Activated CD4-positive, alpha-beta T cell treated with anti-CD3 and anti-CD28 coated beads, Interleukin-2, amount 10 ng/mL, durations not matched to agents 7 days and 5 days (primary cell): ENCODE measurements at regions of chr14 and their contacts with region 1.

Region 1: DNA sequence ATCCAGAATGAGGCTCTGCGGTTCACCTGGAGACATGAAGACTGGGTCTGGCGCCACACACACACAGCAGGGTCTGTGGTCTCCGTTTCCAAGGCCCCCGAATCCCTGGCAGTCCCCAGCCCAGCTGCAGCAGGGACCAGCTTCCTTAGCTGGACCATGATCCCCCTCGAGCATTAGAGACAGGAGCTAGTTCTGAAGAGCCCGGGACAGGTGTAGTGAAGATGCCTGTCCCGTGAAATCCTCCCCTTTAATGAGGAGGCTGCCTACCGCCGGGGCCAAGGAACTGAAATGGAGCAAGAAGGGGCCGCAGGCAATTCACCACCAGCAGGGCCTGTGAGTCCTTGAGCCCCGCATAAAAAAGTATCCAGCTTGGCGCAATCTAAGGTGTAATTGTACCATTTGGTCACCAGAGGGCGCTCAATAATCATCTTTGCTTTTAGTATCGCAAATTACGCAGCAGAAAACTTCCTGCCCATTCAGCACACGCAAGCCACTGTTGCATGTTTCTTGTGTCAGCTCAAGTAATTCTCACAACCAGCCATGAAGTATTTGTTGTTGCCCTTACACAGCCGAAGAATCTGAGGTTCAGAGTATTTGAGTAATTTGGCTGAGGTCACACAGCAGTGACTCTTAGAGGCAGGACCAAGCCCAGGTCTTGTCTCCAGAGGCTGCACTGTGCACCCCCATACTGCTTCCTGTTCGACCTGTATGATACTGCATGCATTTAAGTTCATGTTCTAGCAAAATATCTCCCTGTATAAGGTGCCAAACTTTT is 54.3 kb upstream of the PPP2R5C start:
- DNase-seq: peak; percentile 83
- H3K4me3 Mint-ChIP-seq: no peak overlapping the region
- H3K27ac Mint-ChIP-seq: peak overlapping the region; percentile 86
- H3K4me1 Mint-ChIP-seq: peaks cover 32% of the 10 kb centered on the region
- H3K27me3 Mint-ChIP-seq: peaks cover 21% of the 10 kb centered on the region

Region 2: DNA sequence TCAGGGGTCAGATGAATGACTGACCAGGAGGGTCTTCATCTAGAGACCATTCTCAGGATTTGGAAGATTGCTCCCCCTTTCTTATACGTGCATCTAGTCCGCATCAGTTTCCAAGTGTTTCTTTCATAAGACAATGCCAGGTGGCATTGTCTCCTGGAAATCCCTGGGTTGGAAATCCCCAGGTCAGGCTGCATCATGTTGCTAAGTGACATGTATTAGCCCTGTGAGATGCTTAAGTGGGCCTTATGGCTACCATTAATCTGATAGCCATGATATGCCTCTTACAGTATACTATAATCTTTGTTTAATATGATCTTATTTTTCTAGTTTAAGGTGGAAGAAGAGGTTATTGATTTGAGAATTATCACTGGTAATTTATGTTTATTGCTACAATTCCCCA is 53.2 kb before region 1 on chr14:
- CTCF ChIA-PET with region 1: no interaction called
- POLR2A ChIA-PET with region 1: no interaction called
- DNase-seq: no peak
- H3K4me3 Mint-ChIP-seq: no peak overlapping the region
- H3K27ac Mint-ChIP-seq: no peak overlapping the region
- H3K4me1 Mint-ChIP-seq: peaks cover 6% of the 10 kb centered on the region
- H3K27me3 Mint-ChIP-seq: peaks cover 53% of the 10 kb centered on the region

Region 3: GRCh38 chr14:101726295-101726953 is 19.2 kb after region 1 on chr14:
- CTCF ChIA-PET with region 1: interaction called, 12 read pairs
- POLR2A ChIA-PET with region 1: interaction called, 4 read pairs
- DNase-seq: no peak
- H3K4me3 Mint-ChIP-seq: no peak overlapping the region
- H3K27ac Mint-ChIP-seq: peak overlapping the region; percentile 16
- H3K4me1 Mint-ChIP-seq: peaks cover 36% of the 10 kb centered on the region
- H3K27me3 Mint-ChIP-seq: no peaks in the 10 kb centered on the region

Region 4: DNA sequence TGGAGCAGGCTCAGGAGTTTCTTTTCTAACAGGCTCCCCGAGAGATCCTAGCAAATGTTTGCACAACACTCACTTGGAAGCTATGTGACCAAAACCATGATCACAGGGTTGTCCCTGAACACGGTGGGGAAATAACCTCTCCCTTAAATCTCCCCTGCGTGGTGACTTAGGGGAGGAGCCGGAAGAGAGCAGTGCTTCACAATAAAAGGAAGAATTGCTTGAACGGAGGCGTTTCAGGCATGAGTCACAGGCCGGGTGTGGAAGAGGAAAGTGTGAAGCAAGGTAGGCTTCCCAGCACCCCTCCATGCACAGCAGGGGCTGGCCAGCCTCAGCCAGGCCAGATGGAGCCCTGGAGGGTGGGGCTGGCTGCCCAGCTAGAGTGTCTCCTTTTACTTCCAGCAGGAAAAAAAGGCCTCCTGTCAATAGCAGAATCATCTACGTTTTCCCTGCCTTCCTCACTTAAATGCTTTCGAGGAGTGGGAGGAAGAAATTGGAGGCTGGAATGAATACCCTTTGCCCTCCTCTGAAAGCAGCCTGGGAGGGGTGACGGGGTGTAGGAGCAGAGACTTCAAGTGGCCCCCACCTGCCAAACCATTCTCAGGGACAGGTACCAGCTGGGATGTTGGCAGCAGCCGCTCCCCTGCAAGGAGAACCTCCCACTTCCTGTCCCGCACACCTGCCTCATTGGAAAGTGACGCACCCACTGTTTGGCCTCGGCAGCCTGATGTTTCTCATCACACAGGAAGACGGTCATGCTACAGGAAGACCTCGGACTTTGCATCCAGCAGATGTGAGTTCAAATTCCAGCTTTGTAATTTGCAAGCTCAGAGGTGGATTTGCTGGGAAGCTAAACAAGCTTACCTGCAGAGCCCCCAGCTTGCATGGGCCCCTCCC is 24.2 kb after region 1 on chr14:
- CTCF ChIA-PET with region 1: interaction called, 12 read pairs
- POLR2A ChIA-PET with region 1: no interaction called
- DNase-seq: peak; percentile 82
- H3K4me3 Mint-ChIP-seq: peak overlapping the region; percentile 31
- H3K27ac Mint-ChIP-seq: peak overlapping the region; percentile 88
- H3K4me1 Mint-ChIP-seq: peaks cover 39% of the 10 kb centered on the region
- H3K27me3 Mint-ChIP-seq: no peaks in the 10 kb centered on the region

Region 5: DNA sequence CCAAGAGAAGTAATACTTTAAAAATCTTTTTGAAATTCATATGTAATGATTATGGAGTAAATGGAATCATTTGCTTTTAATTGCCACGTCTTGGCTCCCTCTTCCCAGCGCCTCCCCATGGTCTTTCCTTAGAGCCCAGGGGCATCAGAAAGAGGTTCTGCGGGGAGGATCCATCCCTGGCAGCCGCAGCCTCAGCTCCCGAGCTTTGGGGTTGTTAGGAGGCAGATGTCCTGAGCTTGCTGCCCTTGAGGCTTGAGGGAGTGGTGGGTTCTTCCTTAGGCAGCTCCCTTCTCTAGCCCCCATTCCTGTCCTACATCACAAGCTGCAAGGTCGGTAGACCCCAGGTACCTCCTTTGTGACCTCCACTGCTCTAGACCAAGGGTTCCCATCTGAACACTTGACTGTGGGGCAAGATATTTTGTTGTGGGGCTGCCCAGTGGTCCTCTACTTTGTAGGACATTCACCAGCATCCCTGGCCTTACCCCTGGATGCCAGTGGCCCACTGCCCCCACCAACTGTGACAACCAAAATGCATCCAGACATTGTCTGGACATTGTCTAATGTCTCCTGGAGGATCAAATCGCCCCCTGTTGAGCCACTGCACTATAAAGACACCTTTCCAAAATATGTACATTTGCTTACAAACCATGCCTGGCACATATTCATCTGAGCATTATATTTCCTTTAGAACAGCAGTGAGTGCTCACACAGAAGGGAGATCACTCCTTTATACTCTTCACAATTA is 60.5 kb after region 1 on chr14:
- CTCF ChIA-PET with region 1: interaction called, 19 read pairs
- POLR2A ChIA-PET with region 1: no interaction called
- DNase-seq: no peak
- H3K4me3 Mint-ChIP-seq: no peak overlapping the region
- H3K27ac Mint-ChIP-seq: no peak overlapping the region
- H3K4me1 Mint-ChIP-seq: peaks cover 25% of the 10 kb centered on the region
- H3K27me3 Mint-ChIP-seq: no peaks in the 10 kb centered on the region

Region 6: DNA sequence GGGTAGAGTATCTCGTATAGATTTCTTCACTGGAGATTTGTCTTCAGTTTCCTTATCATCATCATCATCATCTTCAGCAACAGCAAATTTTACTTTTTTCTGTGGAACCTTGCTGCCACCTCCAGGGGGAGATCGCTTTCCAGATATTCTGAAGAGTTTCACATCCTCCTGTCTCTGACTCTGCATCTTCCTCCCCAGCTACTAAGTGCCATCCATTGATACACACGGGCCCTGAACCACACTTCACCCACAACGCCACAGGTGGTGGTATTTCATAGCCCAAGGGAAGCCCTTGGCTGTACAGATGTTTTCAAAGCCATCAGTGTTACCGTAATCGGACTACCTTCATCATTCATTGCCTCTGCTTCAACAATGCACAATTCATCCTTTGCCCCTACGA is 136.4 kb after region 1 on chr14:
- CTCF ChIA-PET with region 1: interaction called, 10 read pairs
- POLR2A ChIA-PET with region 1: interaction called, 4 read pairs
- DNase-seq: peak; percentile 68
- H3K4me3 Mint-ChIP-seq: no peak overlapping the region
- H3K27ac Mint-ChIP-seq: peak overlapping the region; percentile 76
- H3K4me1 Mint-ChIP-seq: peaks cover 85% of the 10 kb centered on the region
- H3K27me3 Mint-ChIP-seq: no peaks in the 10 kb centered on the region